ENCODE measurements at regions of chr1 and their contacts with region 1.

Region 1: DNA sequence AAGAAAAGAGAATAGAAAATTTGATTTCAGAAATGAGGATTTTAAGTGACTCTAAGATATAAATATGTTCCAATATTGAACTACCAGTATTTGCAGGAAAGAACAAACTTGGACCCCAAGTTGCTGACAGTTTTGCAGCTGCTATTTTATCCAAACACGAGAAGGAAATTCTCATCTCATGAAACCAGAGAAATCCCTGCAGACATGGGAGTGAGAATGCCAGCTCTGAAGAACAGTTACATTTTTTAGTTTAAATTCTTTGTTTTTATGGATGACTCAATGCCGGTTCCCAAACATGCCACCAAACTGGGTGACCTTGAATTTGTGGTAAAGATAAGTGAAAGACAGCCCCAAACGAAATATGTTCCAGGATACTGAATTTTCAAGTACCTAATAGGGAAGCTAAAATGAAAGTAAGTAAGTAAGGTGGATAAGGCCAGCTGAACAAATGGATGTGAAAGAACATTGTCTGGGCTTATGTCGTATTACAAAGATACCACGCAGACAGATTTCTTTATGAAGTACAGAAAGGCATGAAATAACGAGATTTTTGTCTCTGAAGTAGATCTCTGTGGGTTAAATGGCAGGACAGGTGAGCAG is 19.9 kb downstream of the TLR5 start:
- DNase-seq: no peak
- H3K4me3 Mint-ChIP-seq: peak overlapping the region; percentile 3
- H3K27ac Mint-ChIP-seq: no peak overlapping the region
- H3K4me1 Mint-ChIP-seq: peaks cover 9% of the 10 kb centered on the region
- H3K27me3 Mint-ChIP-seq: no peaks in the 10 kb centered on the region
- CTCF ChIP-seq: no peak

Region 2: GRCh38 chr1:222938986-222939385 is 184.1 kb before region 1 on chr1:
- CTCF ChIA-PET with region 1: no interaction called
- POLR2A ChIA-PET with region 1: no interaction called
- intact Hi-C with region 1: no loop called
- DNase-seq: no peak
- H3K4me3 Mint-ChIP-seq: no peak overlapping the region
- H3K27ac Mint-ChIP-seq: no peak overlapping the region
- H3K4me1 Mint-ChIP-seq: no peaks in the 10 kb centered on the region
- H3K27me3 Mint-ChIP-seq: no peaks in the 10 kb centered on the region
- CTCF ChIP-seq: no peak

Region 3: DNA sequence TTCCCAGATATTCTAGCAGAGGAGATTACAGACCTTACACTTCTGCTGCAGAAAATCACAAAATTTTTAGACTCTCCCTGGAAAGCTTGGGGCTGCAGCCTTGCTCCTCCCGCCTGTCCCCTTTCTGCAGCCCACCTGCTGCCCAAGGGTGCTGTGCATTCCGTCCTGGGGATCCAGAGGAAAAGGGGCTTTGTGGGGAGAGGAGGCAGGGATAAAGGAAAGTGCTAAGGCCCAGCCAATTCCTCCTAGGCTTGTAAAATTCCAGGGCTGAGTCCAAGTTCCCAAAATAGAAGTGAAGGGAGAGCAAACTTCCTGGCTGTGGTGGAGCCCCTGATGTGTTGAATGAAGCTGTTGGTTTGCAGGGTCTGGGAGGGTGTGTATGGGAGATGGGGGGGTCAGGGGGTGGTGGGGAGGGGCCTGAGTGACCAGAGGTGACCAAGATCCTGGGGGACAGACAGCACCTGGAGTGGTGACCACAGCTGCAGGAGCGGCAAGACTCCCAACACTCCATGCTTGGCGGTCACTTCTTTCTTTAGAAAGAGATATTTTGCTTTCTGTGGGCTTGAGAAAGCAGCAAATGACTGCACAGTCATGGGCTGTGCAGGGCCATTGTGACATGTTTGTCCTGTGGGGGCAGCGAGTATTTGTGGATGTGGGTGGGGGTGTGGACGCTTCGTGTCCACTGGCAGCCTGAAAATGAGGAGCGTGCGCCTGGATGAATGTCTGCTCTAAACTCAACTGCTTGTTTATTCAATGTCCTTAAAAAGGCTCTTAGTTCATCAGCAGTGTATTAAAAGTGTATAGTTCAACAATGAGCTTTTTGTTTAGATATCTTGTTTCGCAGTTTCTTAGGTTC is 48.4 kb before region 1 on chr1:
- CTCF ChIA-PET with region 1: interaction called, 12 read pairs
- POLR2A ChIA-PET with region 1: no interaction called
- intact Hi-C with region 1: no loop called
- DNase-seq: no peak
- H3K4me3 Mint-ChIP-seq: no peak overlapping the region
- H3K27ac Mint-ChIP-seq: no peak overlapping the region
- H3K4me1 Mint-ChIP-seq: no peaks in the 10 kb centered on the region
- H3K27me3 Mint-ChIP-seq: peaks cover 60% of the 10 kb centered on the region
- CTCF ChIP-seq: no peak

Region 4: GRCh38 chr1:223102797-223103533 is 20.1 kb before region 1 on chr1:
- CTCF ChIA-PET with region 1: interaction called, 49 read pairs
- POLR2A ChIA-PET with region 1: no interaction called
- intact Hi-C with region 1: no loop called
- DNase-seq: no peak
- H3K4me3 Mint-ChIP-seq: no peak overlapping the region
- H3K27ac Mint-ChIP-seq: no peak overlapping the region
- H3K4me1 Mint-ChIP-seq: no peaks in the 10 kb centered on the region
- H3K27me3 Mint-ChIP-seq: no peaks in the 10 kb centered on the region
- CTCF ChIP-seq: no peak

Region 5: GRCh38 chr1:223189903-223190724 is 67.0 kb after region 1 on chr1:
- CTCF ChIA-PET with region 1: interaction called, 10 read pairs
- POLR2A ChIA-PET with region 1: no interaction called
- intact Hi-C with region 1: no loop called
- DNase-seq: peak; percentile 92
- H3K4me3 Mint-ChIP-seq: peak overlapping the region; percentile 45
- H3K27ac Mint-ChIP-seq: peak overlapping the region; percentile 93
- H3K4me1 Mint-ChIP-seq: peaks cover 16% of the 10 kb centered on the region
- H3K27me3 Mint-ChIP-seq: peaks cover 17% of the 10 kb centered on the region
- CTCF ChIP-seq: no peak

Region 6: DNA sequence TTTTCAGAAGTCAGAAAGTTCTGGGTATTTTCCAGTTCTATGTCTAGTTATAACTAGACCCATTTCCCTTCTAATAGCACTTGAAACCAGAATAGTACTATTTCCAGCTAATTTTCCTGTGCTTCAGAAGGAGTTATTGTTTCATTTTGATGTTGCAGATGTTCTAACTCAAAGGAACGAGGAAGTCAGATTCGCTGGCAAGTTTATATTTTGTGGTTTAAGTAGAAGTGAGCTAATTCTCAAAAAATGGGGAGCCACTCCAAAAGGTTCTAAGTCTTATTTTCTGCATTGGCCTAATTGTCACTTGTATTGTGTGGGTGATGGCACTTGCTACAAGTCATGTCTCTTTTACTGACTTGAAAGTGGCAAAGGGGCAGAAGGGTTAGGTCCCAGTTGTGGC is 288.2 kb after region 1 on chr1:
- CTCF ChIA-PET with region 1: interaction called, 10 read pairs
- POLR2A ChIA-PET with region 1: no interaction called
- intact Hi-C with region 1: no loop called
- DNase-seq: no peak
- H3K4me3 Mint-ChIP-seq: no peak overlapping the region
- H3K27ac Mint-ChIP-seq: no peak overlapping the region
- H3K4me1 Mint-ChIP-seq: no peaks in the 10 kb centered on the region
- H3K27me3 Mint-ChIP-seq: no peaks in the 10 kb centered on the region
- CTCF ChIP-seq: no peak

Region 7: GRCh38 chr1:223683586-223684487 is 560.7 kb after region 1 on chr1:
- CTCF ChIA-PET with region 1: interaction called, 45 read pairs
- POLR2A ChIA-PET with region 1: no interaction called
- intact Hi-C with region 1: no loop called
- DNase-seq: peak; percentile 85
- H3K4me3 Mint-ChIP-seq: no peak overlapping the region
- H3K27ac Mint-ChIP-seq: no peak overlapping the region
- H3K4me1 Mint-ChIP-seq: peaks cover 6% of the 10 kb centered on the region
- H3K27me3 Mint-ChIP-seq: no peaks in the 10 kb centered on the region
- CTCF ChIP-seq: peak; percentile 94

Measured in MCF 10A (cell line).